ENCODE measurements at regions of chr6 and their contacts with region 1.

Region 1: DNA sequence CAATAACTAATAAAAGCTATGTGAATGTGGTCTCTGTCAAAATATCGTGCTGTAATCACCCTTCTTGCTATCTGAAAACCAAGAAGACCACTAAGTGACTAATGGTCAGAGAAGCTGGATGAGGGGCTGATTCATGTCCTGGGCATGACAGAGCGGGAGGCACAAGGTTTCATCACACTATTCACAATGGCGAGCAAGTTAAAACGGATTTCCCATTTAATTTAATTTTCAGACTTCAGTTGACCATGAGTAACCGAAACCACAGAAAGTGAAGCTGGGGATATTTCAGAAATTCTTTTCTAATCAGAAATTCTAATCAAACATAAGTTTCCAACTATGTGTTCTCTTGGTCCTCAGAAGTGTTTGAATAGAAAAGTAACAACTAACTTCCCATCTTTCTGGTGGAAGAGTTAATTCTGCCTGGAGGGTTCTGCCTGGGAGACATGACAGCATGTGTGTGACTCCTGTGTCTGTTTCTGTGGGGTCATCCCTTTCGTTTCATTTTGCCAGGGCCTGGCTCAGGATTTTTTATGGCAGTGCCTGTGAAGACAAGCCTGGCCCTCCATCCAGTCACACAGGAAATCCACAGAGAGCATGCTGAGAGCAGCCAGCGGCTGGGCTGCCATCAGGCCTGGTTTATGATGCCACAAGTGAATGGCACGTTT is 98.9 kb downstream of the FAM120B start:
- DNase-seq: no peak
- ATAC-seq: no peak
- H3K4me3 ChIP-seq: no peak overlapping the region
- H3K27ac ChIP-seq: peak overlapping the region in 1 of 10 donors; percentile 56
- H3K4me1 ChIP-seq: peaks cover 0 to 2% (median 0%) of the 10 kb centered on the region in 9 donors
- H3K27me3 ChIP-seq: no peaks in the 10 kb centered on the region
- CTCF ChIP-seq: no peak

Region 2: GRCh38 chr6:169810066-169810989 is 595.1 kb before region 1 on chr6:
- intact Hi-C with region 1: loop called in 1 of 10 experiments (anchors 5 kb)
- DNase-seq: no peak
- ATAC-seq: peak in 1 of 8 donors; percentile 18
- H3K4me3 ChIP-seq: no peak overlapping the region
- H3K27ac ChIP-seq: no peak overlapping the region
- H3K4me1 ChIP-seq: no peaks in the 10 kb centered on the region
- H3K27me3 ChIP-seq: peaks cover 0 to 19% (median 8%) of the 10 kb centered on the region in 7 donors
- CTCF ChIP-seq: no peak

Region 3: DNA sequence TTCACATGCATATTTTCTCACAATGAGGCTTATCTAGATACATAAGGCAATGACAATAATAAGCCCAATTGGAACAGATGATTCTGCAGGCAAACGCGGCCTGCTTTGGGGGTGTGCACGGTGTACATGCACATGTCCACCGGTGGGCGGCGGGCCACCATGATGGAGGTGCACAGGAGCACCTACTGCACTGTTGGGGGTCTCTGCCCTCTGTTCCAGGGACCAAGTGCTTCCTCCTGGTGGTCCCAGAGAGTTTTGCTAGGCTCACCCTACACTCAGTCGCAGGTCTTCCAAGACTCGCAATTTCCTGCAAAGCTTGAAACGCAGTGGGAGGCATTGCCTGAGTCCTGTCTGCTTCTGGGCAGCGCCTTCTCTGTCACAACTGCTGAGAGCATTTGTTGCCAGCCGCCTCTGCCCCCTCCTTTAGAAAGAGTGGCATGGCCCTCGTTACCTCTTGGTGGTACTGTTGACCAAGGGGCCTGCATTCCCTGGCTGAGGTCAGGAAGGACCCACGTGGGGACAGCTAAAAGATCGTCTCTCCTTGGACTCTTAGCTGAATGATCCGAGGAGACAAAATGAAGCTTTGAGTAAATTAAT is 518.7 kb before region 1 on chr6:
- intact Hi-C with region 1: no loop called
- DNase-seq: no peak
- ATAC-seq: no peak
- H3K4me3 ChIP-seq: no peak overlapping the region
- H3K27ac ChIP-seq: no peak overlapping the region
- H3K4me1 ChIP-seq: no peaks in the 10 kb centered on the region
- H3K27me3 ChIP-seq: peaks cover 0 to 29% (median 5%) of the 10 kb centered on the region in 7 donors
- CTCF ChIP-seq: no peak

Region 4: DNA sequence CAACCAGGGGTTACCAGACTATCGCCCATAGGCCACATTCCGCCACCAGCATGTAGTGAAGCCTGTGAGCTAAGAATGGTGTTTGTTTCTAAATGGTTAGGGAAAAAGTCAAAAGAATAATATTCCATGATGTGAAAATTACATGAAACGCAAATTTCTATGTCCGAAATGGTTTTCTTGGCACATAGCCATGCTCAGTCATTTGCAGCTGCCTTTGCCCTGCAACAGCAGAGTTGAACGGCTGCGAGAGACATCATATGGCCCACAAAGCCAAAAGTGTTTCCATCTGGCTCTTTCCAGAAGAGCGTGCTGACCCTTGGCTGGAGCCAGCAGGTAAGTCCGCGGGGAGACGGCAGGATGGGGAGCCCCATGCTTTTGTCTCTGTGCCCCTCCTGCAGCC is 38.2 kb before region 1 on chr6:
- intact Hi-C with region 1: no loop called
- DNase-seq: no peak
- ATAC-seq: no peak
- H3K4me3 ChIP-seq: no peak overlapping the region
- H3K27ac ChIP-seq: no peak overlapping the region
- H3K4me1 ChIP-seq: peaks cover 0 to 19% (median 3%) of the 10 kb centered on the region in 9 donors
- H3K27me3 ChIP-seq: no peaks in the 10 kb centered on the region
- CTCF ChIP-seq: no peak